ENCODE measurements at regions of chr10 and their contacts with region 1.

Region 1: DNA sequence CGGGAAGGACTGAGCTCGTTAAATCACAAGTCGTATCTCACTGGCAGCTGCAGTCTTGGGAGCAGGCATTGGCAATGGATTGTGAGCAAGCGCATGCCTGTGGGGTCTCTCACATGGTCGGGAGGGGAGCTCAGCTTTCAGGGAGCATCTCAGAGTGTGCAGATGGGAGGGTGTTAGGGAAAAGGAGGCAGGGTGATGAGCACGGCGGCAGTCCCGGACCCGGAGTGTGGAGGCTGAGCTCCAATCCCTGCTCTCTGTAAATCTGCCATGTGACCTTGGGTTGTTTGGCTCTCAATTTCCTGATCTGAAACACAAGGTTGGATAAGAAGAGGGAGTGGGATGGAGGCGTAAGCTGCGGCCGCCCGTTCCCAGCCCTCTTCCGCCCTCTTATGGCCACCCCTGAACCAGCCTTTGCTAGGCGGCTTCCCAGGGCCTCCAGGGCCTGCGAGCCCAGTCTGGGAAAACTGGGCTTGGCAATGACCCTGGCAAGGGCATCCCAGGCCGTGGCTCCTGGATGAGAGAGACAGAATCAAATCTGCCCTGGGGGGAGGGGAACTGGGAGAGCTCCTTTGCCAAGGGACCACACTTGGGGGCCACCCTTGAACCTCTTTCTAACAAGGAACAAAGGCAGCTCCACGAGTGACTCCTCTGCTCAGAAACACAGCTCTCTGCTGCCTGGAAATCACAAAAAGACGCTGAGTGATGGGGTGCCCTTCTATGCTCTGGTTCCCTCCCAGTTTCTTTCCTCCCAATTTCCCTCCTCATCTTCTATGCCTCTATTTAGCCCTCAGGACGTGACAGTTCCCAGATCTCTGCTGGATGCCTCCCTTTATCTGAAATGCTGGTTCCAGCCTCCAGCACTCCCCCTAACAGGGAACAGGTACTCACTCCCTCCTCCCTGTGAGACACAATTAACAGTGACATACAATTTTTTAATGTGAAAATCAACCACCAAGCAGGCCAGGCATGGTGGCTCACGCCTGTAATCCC is 41.7 kb upstream of the LOXL4 start:
- DNase-seq: peak; percentile 64
- H3K4me3 ChIP-seq: no peak overlapping the region
- H3K27ac ChIP-seq: no peak overlapping the region
- H3K4me1 ChIP-seq: no peaks in the 10 kb centered on the region
- H3K27me3 ChIP-seq: no peaks in the 10 kb centered on the region
- CTCF ChIP-seq: peak; percentile 72

Region 2: DNA sequence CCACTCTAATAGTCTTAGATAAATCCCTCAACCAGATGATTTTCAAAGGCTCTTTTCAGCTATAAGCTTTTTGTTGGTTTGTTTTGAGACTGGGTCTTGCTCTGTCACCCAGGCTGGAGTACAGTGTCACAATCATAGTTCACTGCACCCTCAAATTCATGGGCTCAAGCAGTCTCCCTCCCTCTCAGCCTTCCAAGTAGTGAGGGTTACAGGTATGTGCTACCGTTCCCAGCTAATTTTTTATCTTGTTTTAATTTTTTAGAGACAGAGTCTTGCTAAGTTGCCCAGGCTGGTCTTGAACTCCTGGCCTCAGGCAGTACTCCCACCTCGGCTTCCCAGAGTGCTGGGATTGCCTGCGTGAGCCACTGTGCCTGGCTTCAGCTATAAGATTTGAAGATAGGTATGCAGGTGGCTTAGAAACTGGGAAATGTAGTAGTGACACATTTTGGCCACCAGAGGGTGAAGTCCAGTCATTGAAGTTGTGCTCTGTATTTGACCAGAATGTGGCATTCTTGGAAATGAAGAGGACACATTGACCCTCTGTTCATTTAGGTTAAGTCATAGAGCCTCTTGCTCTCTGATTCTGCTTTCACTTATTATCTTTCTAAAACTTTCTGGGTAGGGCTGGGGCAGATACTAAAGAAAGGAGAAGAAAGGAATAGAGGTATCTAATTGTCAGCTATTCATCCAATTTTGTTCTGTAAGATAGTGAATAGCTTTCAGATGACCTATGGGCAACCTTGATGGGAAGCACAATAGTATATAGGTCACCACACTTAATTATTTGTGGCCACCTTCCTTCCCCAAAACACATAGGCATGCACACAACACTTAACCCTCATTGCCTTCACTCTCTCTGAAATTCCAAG is 139.2 kb before region 1 on chr10:
- intact Hi-C with region 1: loop called (anchors 5 kb)
- DNase-seq: peak; percentile 51
- H3K4me3 ChIP-seq: no peak overlapping the region
- H3K27ac ChIP-seq: no peak overlapping the region
- H3K4me1 ChIP-seq: no peaks in the 10 kb centered on the region
- H3K27me3 ChIP-seq: no peaks in the 10 kb centered on the region
- CTCF ChIP-seq: peak; percentile 63

Region 3: DNA sequence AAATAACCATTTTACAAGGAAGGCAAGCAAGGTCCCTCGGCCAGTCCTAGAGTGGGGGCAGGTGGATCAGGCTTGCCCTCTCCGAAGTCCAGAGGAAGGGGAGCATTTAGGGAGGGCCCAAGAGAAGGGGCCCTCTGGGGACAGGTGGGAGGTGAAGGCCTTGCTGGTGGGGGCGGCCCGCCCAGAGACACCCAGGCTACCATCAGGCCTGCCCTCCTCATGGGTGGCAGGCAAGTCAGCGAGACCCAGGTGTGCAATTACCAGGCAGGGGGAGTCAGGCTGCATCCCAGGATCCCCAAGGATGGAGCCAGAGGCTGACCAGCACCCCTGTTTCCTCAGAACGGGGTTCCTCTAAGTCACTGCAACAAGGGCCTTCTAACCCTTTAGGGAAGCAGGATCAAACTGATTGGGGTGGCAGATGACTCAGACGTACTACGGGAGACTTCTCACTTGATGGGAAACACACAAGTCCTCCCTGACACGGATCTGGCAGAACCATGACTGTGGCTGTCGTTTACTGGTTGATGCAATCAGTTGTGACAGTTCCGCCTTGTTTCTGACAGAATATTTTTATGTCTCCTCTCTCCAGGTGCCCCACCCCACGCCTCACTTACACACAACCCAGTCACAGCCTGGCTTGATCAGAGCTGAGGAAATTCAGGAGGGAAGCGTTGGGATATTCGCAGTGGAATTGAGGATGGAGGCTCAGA is 49.9 kb before region 1 on chr10:
- intact Hi-C with region 1: loop called (anchors 5 kb)
- DNase-seq: no peak
- H3K4me3 ChIP-seq: no peak overlapping the region
- H3K27ac ChIP-seq: no peak overlapping the region
- H3K4me1 ChIP-seq: no peaks in the 10 kb centered on the region
- H3K27me3 ChIP-seq: no peaks in the 10 kb centered on the region
- CTCF ChIP-seq: no peak